ENCODE measurements at regions of chr12 and their contacts with region 1.

Region 1: GRCh38 chr12:27703710-27704452 is 6.8 kb upstream of the MRPS35 start:
- DNase-seq: peak; percentile 92
- H3K4me3 Mint-ChIP-seq: no peak overlapping the region
- H3K27ac Mint-ChIP-seq: no peak overlapping the region
- H3K4me1 Mint-ChIP-seq: peaks cover 2% of the 10 kb centered on the region
- H3K27me3 Mint-ChIP-seq: peaks cover 16% of the 10 kb centered on the region

Region 2: GRCh38 chr12:27652174-27652763 is 51.6 kb before region 1 on chr12:
- intact Hi-C with region 1: loop called (anchors 5 kb)
- DNase-seq: peak; percentile 81
- H3K4me3 Mint-ChIP-seq: no peak overlapping the region
- H3K27ac Mint-ChIP-seq: no peak overlapping the region
- H3K4me1 Mint-ChIP-seq: peaks cover 21% of the 10 kb centered on the region
- H3K27me3 Mint-ChIP-seq: no peaks in the 10 kb centered on the region

Measured in activated CD4-positive, alpha-beta T cell treated with anti-CD3 and anti-CD28 coated beads, Interleukin-2, amount 10 ng/mL, durations not matched to agents 24 days and 14 days (primary cell).